Activated CD8-positive, alpha-beta T cell treated with anti-CD3 and anti-CD28 coated beads for 36 hours (primary cell): ENCODE measurements at regions of chr4 and their contacts with region 1.

Region 1: DNA sequence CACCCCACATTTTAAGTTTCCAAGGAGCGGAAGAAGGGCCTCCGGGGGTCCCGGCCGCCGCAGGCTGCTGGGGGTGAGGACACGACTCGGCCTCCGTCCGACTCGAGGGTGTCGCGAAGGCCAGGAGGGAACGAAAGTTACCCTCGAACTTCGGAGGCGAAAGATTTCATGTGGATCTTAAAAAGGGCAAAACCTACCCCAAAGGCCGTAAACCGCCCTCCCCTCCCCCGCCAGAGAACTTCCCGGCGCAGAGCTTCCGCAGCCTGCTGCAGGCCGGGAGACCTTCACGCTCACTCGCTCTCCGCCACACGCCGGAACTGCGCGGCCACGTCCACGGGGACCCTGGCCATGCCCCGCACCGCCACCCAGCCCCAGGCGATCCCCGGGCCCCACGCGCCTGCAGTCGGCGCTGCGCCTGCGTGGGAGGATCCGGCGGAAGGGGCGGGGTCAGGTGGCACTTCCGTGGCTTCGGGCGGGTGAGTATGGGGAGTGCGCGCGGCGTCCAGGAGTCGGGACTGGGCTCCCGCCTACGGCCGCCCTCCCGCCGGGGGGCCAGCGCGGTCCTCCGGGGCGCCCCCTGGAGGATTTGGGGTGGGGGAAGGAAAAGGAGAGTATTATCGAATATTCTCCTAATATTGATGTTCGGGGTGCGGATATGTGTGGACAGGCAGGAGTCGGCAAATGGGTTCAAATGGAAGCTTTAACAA is at the start of gene MMAA:
- DNase-seq: peak; percentile 96
- ATAC-seq: peak; percentile 90
- H3K4me3 Mint-ChIP-seq: peak within 1 kb of the TSS; percentile 92
- H3K27ac Mint-ChIP-seq: peak within 1 kb of the TSS; percentile 98
- H3K4me1 Mint-ChIP-seq: peaks cover 44% of the 10 kb centered on the region
- H3K27me3 Mint-ChIP-seq: no peaks in the 10 kb centered on the region
- CTCF ChIP-seq: peak; percentile 40
- total RNA-seq, gene MMAA: 14.4 to 15.9 TPM

Region 2: DNA sequence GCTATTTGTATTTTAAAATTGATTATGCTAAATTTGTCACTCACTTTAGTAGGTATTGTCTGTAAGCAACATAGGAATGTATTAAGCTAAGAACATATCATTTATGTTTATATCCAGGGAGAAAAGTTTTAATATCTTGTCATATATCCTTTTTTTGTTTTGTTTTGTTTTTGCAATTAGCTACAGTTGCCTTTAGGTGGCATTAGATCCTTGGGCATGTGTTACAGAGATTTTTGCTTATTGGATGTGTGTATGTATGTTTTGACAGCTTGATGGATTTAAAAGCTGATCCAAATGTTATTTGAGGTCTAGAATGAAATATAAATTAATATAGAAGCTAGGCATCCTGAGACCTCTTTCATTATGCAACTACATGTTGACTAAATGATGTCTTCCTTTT is 402.6 kb before region 1 on chr4:
- CTCF ChIA-PET with region 1: interaction called, 23 read pairs
- POLR2A ChIA-PET with region 1: no interaction called
- intact Hi-C with region 1: no loop called
- DNase-seq: no peak
- ATAC-seq: no peak
- H3K4me3 Mint-ChIP-seq: no peak overlapping the region
- H3K27ac Mint-ChIP-seq: no peak overlapping the region
- H3K4me1 Mint-ChIP-seq: no peaks in the 10 kb centered on the region
- H3K27me3 Mint-ChIP-seq: peaks cover 4% of the 10 kb centered on the region
- CTCF ChIP-seq: peak; percentile 40

Region 3: GRCh38 chr4:145481164-145481941 is 137.7 kb before region 1 on chr4 and contains the start of gene SMAD1:
- CTCF ChIA-PET with region 1: no interaction called
- POLR2A ChIA-PET with region 1: no interaction called
- intact Hi-C with region 1: loop called (anchors 5 kb)
- DNase-seq: peak; percentile 41
- ATAC-seq: peak; percentile 43
- H3K4me3 Mint-ChIP-seq: peak within 1 kb of the TSS; percentile 69
- H3K27ac Mint-ChIP-seq: no peak within 1 kb of the TSS
- H3K4me1 Mint-ChIP-seq: peaks cover 5% of the 10 kb centered on the region
- H3K27me3 Mint-ChIP-seq: peaks cover 36% of the 10 kb centered on the region
- CTCF ChIP-seq: no peak
- total RNA-seq, gene SMAD1: 0.67 to 0.92 TPM

Region 4: GRCh38 chr4:145732895-145733880 is 114.1 kb after region 1 on chr4:
- CTCF ChIA-PET with region 1: interaction called, 3 read pairs
- POLR2A ChIA-PET with region 1: no interaction called
- intact Hi-C with region 1: loop called (anchors 5 kb)
- DNase-seq: peak; percentile 89
- ATAC-seq: peak; percentile 96
- H3K4me3 Mint-ChIP-seq: peak overlapping the region; percentile 69
- H3K27ac Mint-ChIP-seq: peak overlapping the region; percentile 49
- H3K4me1 Mint-ChIP-seq: peaks cover 17% of the 10 kb centered on the region
- H3K27me3 Mint-ChIP-seq: peaks cover 12% of the 10 kb centered on the region
- CTCF ChIP-seq: no peak

Region 5: GRCh38 chr4:145936142-145936996 is 317.3 kb after region 1 on chr4:
- CTCF ChIA-PET with region 1: interaction called, 4 read pairs
- POLR2A ChIA-PET with region 1: interaction called, 4 read pairs
- intact Hi-C with region 1: loop called (anchors 5 kb)
- DNase-seq: peak; percentile 78
- ATAC-seq: peak; percentile 45
- H3K4me3 Mint-ChIP-seq: peak overlapping the region; percentile 96
- H3K27ac Mint-ChIP-seq: peak overlapping the region; percentile 97
- H3K4me1 Mint-ChIP-seq: peaks cover 48% of the 10 kb centered on the region
- H3K27me3 Mint-ChIP-seq: no peaks in the 10 kb centered on the region
- CTCF ChIP-seq: peak; percentile 48